ENCODE measurements at regions of chr4 and their contacts with region 1.

Region 1: GRCh38 chr4:57020467-57021101 is 41.9 kb downstream of the POLR2B start:
- ATAC-seq: peak in 2 of 8 experiments; percentile 52 to 69
- H3K4me3 ChIP-seq: no peak overlapping the region
- H3K27ac ChIP-seq: no peak overlapping the region
- H3K4me1 ChIP-seq: no peaks in the 10 kb centered on the region

Region 2: DNA sequence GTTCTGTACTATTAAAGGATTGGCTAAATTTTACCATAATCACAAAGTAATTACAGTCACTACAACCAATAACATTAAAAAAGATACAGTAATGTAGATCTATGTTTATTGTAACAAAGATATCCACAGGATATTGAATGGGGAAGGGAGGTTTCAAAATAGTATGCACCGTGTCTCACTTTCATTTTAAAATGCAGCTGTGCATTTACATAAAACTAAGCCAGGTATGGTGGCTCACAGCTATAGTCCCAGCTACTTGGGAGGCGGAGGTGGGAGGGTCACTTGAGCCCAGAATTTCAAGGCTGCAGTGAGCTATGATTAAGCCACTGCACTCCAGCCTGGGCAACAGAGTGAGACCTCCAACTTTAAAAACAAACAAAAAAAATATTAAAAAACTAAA is 544.7 kb before region 1 on chr4:
- in situ Hi-C with region 1: loop called in 1 of 9 experiments (anchors 25 kb)
- ATAC-seq: no peak
- H3K4me3 ChIP-seq: no peak overlapping the region
- H3K27ac ChIP-seq: no peak overlapping the region
- H3K4me1 ChIP-seq: no peaks in the 10 kb centered on the region